ENCODE measurements at regions of chr2 and their contacts with region 1.

Region 1: GRCh38 chr2:26745609-26746327 is 18.3 kb upstream of the SLC35F6 start:
- DNase-seq: peak; percentile 83
- ATAC-seq: peak; percentile 80

Region 2: DNA sequence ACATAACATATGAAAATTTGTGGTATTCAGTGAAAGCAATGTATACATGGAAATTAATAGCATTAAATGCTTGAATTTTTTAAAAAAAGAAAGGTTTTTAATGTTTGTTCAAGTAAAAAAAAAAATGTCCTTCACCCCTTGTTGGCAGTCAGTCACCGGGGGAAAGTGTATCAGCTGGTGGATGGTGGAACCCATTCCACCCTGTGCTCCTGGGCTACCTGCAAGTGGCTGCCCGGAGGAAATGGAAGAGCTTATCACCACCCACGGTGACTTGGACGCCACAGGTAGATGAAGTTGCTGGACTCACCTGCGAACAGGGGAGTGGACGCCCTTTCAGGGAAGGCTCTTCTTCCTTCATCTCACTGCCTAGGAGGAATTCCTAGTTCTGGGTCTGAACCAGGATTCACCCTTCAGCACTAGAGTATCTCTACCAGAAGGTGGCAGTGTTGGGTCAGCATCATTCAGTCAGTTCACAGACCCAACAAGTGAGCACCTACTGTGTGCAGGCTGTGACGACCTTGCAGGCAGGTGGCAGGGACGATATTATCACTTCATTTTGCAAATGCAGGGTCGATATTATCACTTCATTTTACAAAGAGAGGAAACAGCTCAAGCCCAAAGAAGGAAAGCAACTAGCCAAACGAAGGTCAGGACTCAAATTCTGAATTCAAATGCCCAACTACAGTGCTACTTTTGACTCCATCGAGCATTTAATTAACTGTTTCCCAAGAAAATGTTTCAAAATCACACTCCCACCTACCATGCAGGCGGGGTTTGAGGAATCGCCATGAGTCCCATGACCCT is 140.4 kb before region 1 on chr2:
- intact Hi-C with region 1: loop called (anchors 1 kb)
- DNase-seq: no peak
- ATAC-seq: peak; percentile 34

Region 3: DNA sequence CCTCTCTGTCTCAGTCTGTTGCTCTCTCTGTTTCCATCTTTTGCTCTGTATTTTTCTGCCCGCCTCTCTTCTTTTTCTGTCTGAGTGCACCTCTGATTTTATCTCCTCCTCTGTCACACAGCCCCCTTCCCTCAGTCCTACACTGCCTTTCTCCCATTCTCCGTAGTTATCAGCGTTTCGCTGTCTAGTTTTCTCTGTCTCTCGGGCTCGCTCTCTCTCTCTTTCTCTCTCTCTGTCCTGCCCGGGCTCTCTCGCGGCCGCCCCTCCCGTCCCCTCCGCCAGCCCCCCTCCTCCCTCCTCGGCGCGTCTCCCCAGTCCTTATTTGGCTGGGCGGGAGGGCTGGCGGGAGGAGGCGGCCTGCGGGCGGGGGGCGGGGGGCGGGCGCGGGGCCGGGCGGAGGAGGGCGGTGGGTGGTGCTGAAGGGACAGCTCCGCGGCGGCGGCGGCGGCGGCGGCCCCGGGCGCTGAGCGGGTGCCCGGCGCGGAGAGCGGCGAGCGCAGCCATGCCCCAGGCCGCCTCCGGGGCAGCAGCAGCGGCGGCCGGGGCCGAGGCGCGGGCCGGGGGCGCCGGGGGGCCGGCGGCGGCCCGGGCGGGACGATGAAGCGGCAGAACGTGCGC is 53.4 kb before region 1 on chr2 and contains the start of gene KCNK3:
- intact Hi-C with region 1: loop called (anchors 5 kb)
- DNase-seq: no peak
- ATAC-seq: peak; percentile 72
- total RNA-seq, gene KCNK3: 4.5 TPM